ENCODE measurements at regions of chr5 and their contacts with region 1.

Region 1: DNA sequence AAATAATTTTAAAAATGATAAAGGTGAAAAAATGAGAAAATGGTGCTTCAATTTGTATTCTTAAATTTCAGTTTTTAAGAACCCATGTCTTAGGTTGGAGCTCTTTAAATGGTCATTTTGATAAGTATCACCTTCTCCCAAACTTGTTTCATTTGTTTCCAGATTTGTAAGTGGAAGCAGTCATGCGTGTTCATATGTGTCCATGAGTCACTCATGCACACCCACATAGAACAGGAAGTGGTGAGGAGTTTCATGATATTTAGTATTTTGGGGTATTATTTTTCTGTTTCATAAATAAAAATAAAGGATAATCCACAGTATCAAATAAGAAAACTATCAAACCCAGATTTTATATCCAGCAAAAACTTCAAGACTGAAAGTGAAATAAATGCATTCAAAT is 570.4 kb upstream of the ST8SIA4 start:
- DNase-seq: no peak

Region 2: GRCh38 chr5:99694884-99695283 is 1778.6 kb before region 1 on chr5:
- intact Hi-C with region 1: no loop called
- DNase-seq: peak; percentile 45

Region 3: DNA sequence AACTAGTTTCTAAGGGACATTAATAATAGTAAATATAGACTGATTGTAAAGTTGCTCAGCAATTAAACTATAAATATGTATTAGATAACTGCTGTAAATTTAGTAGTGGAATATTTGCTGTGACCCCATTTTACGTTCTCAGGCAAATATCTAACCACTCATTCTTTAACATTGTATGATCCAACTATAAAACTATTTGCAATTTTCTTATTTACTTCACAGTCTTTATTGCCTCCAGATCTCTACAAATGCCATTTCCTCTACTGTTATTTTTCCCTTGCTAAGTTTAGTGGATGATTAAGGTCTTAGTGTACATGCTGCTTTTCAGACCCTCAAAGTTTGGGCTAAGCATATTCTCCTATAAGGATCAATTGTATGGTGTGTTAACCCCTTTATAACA is 44.2 kb before region 1 on chr5:
- intact Hi-C with region 1: no loop called
- DNase-seq: no peak

Region 4: DNA sequence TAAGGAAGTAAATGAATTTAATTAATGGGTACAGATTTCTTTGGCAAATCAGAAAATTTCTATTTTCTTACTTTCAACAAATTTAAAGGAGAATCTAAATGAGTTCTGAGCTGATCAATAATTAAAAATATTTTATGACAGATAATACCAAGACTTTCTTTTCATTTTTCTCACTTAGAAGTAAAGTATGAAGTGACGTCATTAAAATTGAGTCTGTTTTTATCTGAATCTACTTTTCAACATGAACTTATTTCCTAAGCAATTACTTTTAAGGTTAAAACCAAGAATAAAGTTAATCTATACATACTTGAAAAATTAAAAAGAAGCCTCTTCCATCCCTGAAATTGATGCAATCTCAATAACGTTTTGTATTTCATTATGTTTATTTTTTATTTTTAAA is 17.6 kb before region 1 on chr5:
- intact Hi-C with region 1: loop called in 1 of 2 experiments (anchors 1 kb)
- DNase-seq: no peak